Activated naive CD4-positive, alpha-beta T cell treated with anti-CD3 and anti-CD28 coated beads, Interleukin-2, amount 10 ng/mL, durations not matched to agents 7 days and 5 days (primary cell): ENCODE measurements at regions of chr11 and their contacts with region 1.

Region 1: DNA sequence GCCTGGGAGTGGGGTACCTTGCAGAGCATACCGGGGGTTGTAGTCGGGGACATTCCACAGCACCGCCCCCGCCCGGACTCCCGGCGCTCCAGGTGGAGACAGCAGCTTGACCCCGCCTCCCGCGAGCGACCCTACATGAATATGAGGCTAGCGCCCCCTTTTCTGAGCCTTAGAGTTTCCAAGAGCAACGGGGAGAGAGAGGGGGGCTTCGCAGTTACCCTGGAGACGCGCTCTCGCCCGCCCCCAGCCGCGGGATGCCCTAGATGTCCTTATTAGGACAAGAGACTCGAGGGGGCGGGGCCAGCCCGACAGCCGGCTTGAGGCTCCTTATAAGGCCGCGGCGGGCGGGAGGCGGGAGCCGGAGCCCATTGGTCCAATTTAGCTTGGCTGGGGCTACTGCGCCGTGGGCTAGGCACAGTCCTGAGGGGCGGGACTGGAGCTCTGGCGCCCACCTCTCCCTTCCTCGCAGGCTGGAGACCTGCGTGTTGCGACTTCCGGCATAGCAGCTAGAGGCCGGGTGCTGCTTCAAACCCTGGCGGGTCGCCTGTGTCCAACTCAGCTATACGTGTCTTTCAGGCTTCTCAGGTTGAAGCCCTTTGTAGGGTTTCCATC is 927 bp upstream of the MUS81 start:
- DNase-seq: peak; percentile 100
- H3K4me3 Mint-ChIP-seq: peak overlapping the region; percentile 94
- H3K27ac Mint-ChIP-seq: peak overlapping the region; percentile 99
- H3K4me1 Mint-ChIP-seq: peaks cover 58% of the 10 kb centered on the region
- H3K27me3 Mint-ChIP-seq: no peaks in the 10 kb centered on the region

Region 2: DNA sequence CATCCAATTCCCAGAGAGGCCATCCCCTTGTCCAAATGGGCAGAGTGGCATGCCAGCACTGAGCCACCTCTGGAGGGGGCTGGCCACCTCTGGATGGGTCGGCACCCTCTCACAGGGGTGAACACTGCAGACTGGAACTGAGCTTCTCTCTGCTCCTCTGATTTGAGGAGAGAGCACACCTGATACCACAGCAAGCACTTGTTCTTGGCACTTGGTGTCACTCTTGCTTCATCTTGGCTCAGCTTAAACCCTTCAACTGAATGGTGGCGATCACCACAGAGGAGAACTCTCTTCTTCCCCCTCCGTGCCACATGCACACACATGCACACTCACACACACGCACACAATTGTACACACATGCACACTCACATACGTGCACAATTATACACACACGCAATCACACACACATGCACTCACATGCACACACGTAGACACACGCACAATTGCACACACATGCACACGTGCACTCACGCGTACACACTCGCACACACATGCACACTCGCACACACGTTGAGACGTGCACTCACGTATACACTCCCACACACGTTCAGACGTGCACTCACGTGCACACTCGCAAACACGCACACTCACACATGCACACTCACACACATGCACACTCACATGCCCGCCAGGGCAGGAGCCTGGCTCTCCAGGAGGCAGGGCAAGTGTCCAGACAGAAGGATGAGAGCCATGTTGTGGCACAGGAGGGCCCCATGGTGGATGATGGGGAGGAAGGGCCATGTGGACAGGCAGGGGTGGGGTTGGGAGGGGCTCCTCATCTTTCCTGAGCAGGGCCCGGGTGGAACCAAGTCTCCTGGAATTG is 49.0 kb before region 1 on chr11:
- CTCF ChIA-PET with region 1: no interaction called
- DNase-seq: no peak
- H3K4me3 Mint-ChIP-seq: no peak overlapping the region
- H3K27ac Mint-ChIP-seq: no peak overlapping the region
- H3K4me1 Mint-ChIP-seq: peaks cover 12% of the 10 kb centered on the region
- H3K27me3 Mint-ChIP-seq: peaks cover 60% of the 10 kb centered on the region

Region 3: GRCh38 chr11:65873318-65874156 is 14.2 kb after region 1 on chr11:
- CTCF ChIA-PET with region 1: interaction called, 39 read pairs
- DNase-seq: peak; percentile 96
- H3K4me3 Mint-ChIP-seq: peak overlapping the region; percentile 85
- H3K27ac Mint-ChIP-seq: peak overlapping the region; percentile 75
- H3K4me1 Mint-ChIP-seq: peaks cover 51% of the 10 kb centered on the region
- H3K27me3 Mint-ChIP-seq: peaks cover 34% of the 10 kb centered on the region

Region 4: DNA sequence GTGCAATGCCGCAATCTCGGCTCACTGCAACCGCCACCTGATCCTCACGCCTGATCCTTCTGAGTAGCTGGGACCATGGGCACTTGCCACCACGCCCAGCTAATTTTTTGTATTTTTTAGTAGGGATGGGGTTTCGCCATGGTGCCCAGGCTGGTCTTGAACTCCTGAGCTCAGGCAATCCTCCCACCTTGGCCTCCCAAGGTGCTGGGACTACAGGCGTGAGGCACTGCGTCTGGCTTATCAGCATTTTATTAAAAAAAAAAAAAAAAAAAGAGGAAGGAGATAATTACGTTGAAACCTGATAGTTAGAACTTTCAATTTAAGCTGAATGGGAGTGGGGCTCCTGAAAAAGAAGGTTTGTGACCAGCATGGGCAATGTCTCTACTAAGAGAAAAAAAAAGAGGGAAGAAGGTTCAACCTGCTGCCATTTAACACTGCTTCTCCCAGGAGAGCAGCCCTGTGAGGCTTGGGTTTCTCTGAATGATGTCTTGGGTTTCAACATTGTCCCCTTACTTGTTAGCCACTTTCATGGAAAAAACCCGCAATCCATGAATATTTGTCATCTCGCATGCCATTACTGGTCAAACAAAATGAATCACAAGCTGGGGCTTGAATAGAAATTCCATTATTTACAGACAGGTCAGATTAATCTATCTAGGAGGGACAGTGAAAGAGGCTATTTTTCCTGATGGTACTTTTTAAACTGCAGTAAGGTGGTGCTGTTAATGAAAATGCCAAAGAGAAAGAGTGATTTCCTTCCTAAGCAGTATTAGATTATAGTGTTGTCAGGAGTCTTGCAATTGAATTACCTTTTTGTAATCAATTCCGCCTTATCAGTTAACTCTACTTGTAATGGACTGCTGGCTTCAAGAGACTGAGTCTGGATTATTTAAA is 283.3 kb after region 1 on chr11:
- CTCF ChIA-PET with region 1: no interaction called
- DNase-seq: no peak
- H3K4me3 Mint-ChIP-seq: no peak overlapping the region
- H3K27ac Mint-ChIP-seq: no peak overlapping the region
- H3K4me1 Mint-ChIP-seq: peaks cover 24% of the 10 kb centered on the region
- H3K27me3 Mint-ChIP-seq: no peaks in the 10 kb centered on the region

Region 5: GRCh38 chr11:66344550-66345315 is 485.4 kb after region 1 on chr11 and contains the start of gene BRMS1:
- CTCF ChIA-PET with region 1: no interaction called
- DNase-seq: peak; percentile 99
- H3K4me3 Mint-ChIP-seq: peak within 1 kb of the TSS; percentile 94
- H3K27ac Mint-ChIP-seq: peak within 1 kb of the TSS; percentile 92
- H3K4me1 Mint-ChIP-seq: peaks cover 54% of the 10 kb centered on the region
- H3K27me3 Mint-ChIP-seq: peaks cover 7% of the 10 kb centered on the region